ENCODE measurements at regions of chr2 and their contacts with region 1.

Region 1: GRCh38 chr2:73779467-73780236 is at the start of gene DUSP11:
- DNase-seq: peak; percentile 69
- H3K4me3 ChIP-seq: peak within 1 kb of the TSS; percentile 80 to 94 (median 83)
- H3K27ac ChIP-seq: peak within 1 kb of the TSS; percentile 95 to 98 (median 97)
- H3K4me1 ChIP-seq: peaks cover 0 to 42% (median 12%) of the 10 kb centered on the region in 3 donors
- H3K27me3 ChIP-seq: no peaks in the 10 kb centered on the region
- CTCF ChIP-seq: peak; percentile 72 to 95 (median 90)
- POLR2A ChIP-seq: peak in 3 of 4 donors; percentile 44 to 88 (median 83)
- total RNA-seq, gene DUSP11: 24.5 to 48.2 (median 41.0) TPM

Region 2: DNA sequence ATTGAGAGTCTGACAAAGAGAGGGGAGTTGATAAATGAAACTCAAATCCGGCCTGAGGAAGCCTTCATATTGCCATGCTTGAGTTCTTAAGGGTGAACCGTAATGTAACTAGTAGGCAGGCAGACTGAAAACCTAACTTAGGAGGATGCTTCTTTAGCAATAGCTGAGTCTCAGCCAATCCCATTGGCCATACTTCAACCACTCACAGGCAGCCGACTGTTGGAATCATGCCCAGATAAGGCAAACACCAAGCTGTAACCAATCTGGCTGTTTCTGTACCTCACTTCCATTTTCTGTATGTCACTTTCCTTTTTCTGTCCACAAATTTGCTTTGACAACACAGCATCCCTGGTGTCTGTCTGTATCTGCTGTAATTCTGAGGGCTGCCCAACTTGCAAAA is 82.0 kb before region 1 on chr2:
- intact Hi-C with region 1: loop called (anchors 10 kb)
- DNase-seq: no peak
- H3K4me3 ChIP-seq: no peak overlapping the region
- H3K27ac ChIP-seq: no peak overlapping the region
- H3K4me1 ChIP-seq: peaks cover 0 to 34% (median 10%) of the 10 kb centered on the region in 3 donors
- H3K27me3 ChIP-seq: no peaks in the 10 kb centered on the region
- CTCF ChIP-seq: no peak
- POLR2A ChIP-seq: no peak

Measured in esophagus squamous epithelium (tissue), 5 donors.